ENCODE measurements at regions of chr14 and their contacts with region 1.

Region 1: DNA sequence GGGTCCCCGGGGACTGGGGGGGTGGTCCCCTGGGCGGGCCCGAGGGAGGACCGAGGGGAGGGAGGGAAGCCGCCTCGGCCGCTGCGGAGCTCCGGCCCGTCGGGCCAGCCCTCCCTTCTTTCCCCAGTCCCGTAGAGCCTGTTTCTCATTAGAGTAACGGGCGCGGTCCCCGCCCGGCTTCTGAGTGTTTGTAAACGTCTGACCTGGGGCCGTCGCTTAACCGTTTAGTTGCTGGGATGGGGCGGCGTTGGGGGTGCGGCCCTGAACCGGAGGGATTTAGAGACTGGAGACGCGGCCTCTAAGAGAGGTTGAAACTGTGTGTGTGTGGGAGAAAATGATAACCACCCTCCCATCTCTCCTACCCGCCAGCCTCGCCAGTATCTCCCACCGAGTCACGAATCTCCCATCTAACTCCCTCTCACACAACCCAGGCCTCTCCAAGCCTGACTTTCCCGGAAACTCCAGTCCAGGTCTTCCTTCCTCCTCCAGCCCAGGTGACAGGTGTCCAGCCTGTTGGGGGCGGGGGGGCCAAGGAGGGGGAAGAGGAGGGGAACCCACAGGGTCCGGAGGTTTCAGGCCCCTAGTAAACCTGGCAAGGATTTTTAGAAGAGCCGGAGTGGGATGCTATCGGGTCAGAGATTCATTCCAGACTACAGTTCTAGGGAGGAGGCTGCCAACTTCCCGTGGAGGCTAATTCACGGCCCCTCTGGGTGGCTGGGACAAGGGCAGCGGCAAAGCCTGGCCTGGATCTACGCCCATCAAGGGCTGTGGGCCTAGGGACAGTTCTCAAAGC is 1.1 kb upstream of the NFATC4 start:
- DNase-seq: peak; percentile 92 to 95 (median 93)
- ATAC-seq: peak; percentile 82
- H3K4me3 ChIP-seq: peak overlapping the region; percentile 14
- H3K4me1 ChIP-seq: peaks cover 5% of the 10 kb centered on the region
- CTCF ChIP-seq: no peak

Region 2: GRCh38 chr14:24332268-24332993 is 34.5 kb before region 1 on chr14:
- intact Hi-C with region 1: loop called in 1 of 2 experiments (anchors 5 kb)
- DNase-seq: peak; percentile 76 to 87 (median 80)
- ATAC-seq: peak; percentile 75
- H3K4me3 ChIP-seq: no peak overlapping the region
- H3K4me1 ChIP-seq: peaks cover 36% of the 10 kb centered on the region
- CTCF ChIP-seq: peak; percentile 60

Region 3: GRCh38 chr14:24431569-24432258 is 64.8 kb after region 1 on chr14:
- intact Hi-C with region 1: loop called (anchors 5 kb)
- DNase-seq: peak; percentile 93 to 96 (median 93)
- ATAC-seq: peak; percentile 70
- H3K4me3 ChIP-seq: no peak overlapping the region
- H3K4me1 ChIP-seq: peaks cover 42% of the 10 kb centered on the region
- CTCF ChIP-seq: peak; percentile 90

Measured in mucosa of descending colon (tissue), 3 donors.